Testis (tissue), 5 donors: ENCODE measurements at regions of chr13 and their contacts with region 1.

Region 1: GRCh38 chr13:51797664-51798488 is 6.1 kb downstream of the DHRS12 start:
- DNase-seq: peak; percentile 69
- H3K4me3 ChIP-seq: no peak overlapping the region
- H3K27ac ChIP-seq: no peak overlapping the region
- H3K4me1 ChIP-seq: peaks cover 13% of the 10 kb centered on the region
- H3K27me3 ChIP-seq: no peaks in the 10 kb centered on the region
- CTCF ChIP-seq: peak in 2 of 3 experiments; percentile 26 to 31
- POLR2A ChIP-seq: no peak

Region 2: DNA sequence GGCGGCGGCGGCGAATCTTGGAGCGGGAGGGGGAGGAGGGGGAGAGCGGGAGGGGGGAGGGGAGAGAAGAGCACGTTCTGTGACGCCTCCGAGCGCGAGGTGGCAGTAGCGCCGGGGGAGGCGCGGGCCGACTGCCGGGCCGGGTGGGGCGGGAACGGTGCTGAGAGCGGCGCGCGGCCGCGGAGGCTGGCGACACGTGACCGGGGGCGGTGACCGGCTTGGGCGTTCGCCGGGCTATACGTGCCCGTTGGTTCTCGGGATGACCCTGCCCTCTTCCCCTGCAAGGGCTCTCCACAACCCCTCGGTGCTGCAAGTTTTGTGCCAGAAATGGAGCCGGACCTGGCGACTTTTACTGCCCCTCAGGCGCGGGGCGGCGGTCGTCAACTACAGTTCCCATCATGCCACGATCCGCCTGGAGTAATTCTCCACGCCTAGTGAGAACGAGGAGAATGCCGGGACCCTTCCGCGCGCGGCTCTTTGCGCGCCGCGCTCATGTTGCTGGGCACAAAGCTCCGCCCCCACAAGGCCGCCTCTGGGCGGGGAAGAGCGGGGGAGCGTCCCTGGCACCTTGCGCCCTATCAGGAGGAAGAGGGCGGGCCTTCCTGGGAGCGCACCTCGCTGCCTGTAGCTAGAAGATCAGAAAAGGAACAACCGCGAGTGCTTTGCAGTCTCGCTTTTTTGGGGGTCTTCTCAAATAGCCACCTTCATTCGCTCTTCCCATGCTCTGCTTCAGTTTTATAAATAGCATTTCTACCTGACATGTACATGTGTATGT is 2005.1 kb before region 1 on chr13 and contains the start of gene KPNA3:
- intact Hi-C with region 1: loop called (anchors 5 kb)
- DNase-seq: peak; percentile 97
- H3K4me3 ChIP-seq: peak within 1 kb of the TSS; percentile 91 to 94
- H3K27ac ChIP-seq: peak within 1 kb of the TSS; percentile 73 to 97
- H3K4me1 ChIP-seq: peaks cover 4% of the 10 kb centered on the region
- H3K27me3 ChIP-seq: no peaks in the 10 kb centered on the region
- CTCF ChIP-seq: peak in 2 of 3 experiments; percentile 1 to 18
- POLR2A ChIP-seq: no peak
- total RNA-seq, gene KPNA3: 39.4 to 51.3 TPM

Region 3: GRCh38 chr13:50843257-50844083 is 954.4 kb before region 1 on chr13 and contains the start of gene DLEU7:
- intact Hi-C with region 1: no loop called
- DNase-seq: peak; percentile 40
- H3K4me3 ChIP-seq: peak within 1 kb of the TSS; percentile 24 to 37
- H3K27ac ChIP-seq: no peak within 1 kb of the TSS
- H3K4me1 ChIP-seq: peaks cover 8% of the 10 kb centered on the region
- H3K27me3 ChIP-seq: no peaks in the 10 kb centered on the region
- CTCF ChIP-seq: no peak
- POLR2A ChIP-seq: no peak
- total RNA-seq, gene DLEU7: 0.71 to 0.81 TPM

Region 4: DNA sequence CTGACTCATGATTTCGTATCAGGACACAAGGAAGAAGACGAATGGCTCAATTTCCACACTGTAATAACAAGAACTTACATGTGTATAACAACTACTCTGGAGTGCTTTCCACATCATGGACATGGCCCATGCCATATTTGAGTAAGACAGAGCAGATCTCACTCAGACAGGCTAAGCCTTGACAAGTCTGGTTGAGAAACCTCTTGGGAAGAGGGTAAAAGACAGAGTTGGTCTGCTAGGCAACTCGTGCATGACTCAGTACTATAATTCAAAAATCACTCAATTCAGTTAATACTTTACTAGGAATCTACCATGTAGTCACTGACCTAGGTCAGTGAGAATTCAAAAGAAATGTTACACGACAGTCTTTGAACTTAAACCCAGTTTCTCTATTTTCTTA is 613.8 kb after region 1 on chr13:
- intact Hi-C with region 1: no loop called
- DNase-seq: no peak
- H3K4me3 ChIP-seq: no peak overlapping the region
- H3K27ac ChIP-seq: no peak overlapping the region
- H3K4me1 ChIP-seq: no peaks in the 10 kb centered on the region
- H3K27me3 ChIP-seq: no peaks in the 10 kb centered on the region
- CTCF ChIP-seq: no peak
- POLR2A ChIP-seq: no peak